ENCODE measurements at regions of chr2 and their contacts with region 1.

Region 1: GRCh38 chr2:23926750-23927571 is at the start of gene ATAD2B:
- DNase-seq: peak; percentile 86 to 98 (median 92)
- ATAC-seq: peak; percentile 82
- H3K4me3 ChIP-seq: peak within 1 kb of the TSS; percentile 84 to 95
- H3K4me3 Mint-ChIP-seq: peak within 1 kb of the TSS; percentile 99
- H3K27ac ChIP-seq: peak within 1 kb of the TSS; percentile 95 to 99
- H3K27ac Mint-ChIP-seq: peak within 1 kb of the TSS; percentile 100
- H3K4me1 ChIP-seq: peaks cover 33% of the 10 kb centered on the region
- H3K4me1 Mint-ChIP-seq: peaks cover 52% of the 10 kb centered on the region
- H3K27me3 ChIP-seq: no peaks in the 10 kb centered on the region
- H3K27me3 Mint-ChIP-seq: no peaks in the 10 kb centered on the region
- CTCF ChIP-seq: peak; percentile 52
- total RNA-seq, gene ATAD2B: 32.0 to 32.4 TPM

Region 2: GRCh38 chr2:23824777-23825212 is 102.2 kb before region 1 on chr2:
- CTCF ChIA-PET with region 1: interaction called, 13 read pairs
- POLR2A ChIA-PET with region 1: interaction called, 4 read pairs
- intact Hi-C with region 1: loop called in 1 of 2 experiments (anchors 1 kb)
- DNase-seq: peak in 3 of 9 experiments; percentile 42 to 68 (median 60)
- ATAC-seq: peak; percentile 69
- H3K4me3 ChIP-seq: no peak overlapping the region
- H3K4me3 Mint-ChIP-seq: no peak overlapping the region
- H3K27ac ChIP-seq: no peak overlapping the region
- H3K27ac Mint-ChIP-seq: no peak overlapping the region
- H3K4me1 ChIP-seq: no peaks in the 10 kb centered on the region
- H3K4me1 Mint-ChIP-seq: no peaks in the 10 kb centered on the region
- H3K27me3 ChIP-seq: no peaks in the 10 kb centered on the region
- H3K27me3 Mint-ChIP-seq: no peaks in the 10 kb centered on the region
- CTCF ChIP-seq: peak; percentile 78

Region 3: DNA sequence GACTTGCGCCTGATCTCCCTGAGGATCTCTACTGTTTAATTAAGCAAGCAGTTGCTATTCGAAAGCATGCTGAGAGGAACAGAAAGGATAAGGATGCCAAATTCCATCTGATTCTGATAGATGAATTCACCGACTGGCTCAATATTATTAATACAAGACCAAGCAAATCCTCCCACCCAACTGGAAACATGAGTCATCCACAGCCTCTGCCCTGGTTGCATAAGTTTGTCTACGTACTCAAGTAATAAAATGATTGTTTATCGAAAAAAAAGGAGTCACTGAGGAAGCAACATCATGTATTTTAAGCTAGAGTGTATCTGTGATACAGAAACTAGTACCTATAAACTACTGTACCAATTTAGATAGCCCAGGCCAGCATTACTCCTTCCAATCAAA is 26.0 kb before region 1 on chr2:
- CTCF ChIA-PET with region 1: interaction called, 14 read pairs
- POLR2A ChIA-PET with region 1: interaction called, 5 read pairs
- intact Hi-C with region 1: no loop called
- DNase-seq: no peak
- ATAC-seq: no peak
- H3K4me3 ChIP-seq: no peak overlapping the region
- H3K4me3 Mint-ChIP-seq: no peak overlapping the region
- H3K27ac ChIP-seq: no peak overlapping the region
- H3K27ac Mint-ChIP-seq: no peak overlapping the region
- H3K4me1 ChIP-seq: peaks cover 13% of the 10 kb centered on the region
- H3K4me1 Mint-ChIP-seq: peaks cover 57% of the 10 kb centered on the region
- H3K27me3 ChIP-seq: no peaks in the 10 kb centered on the region
- H3K27me3 Mint-ChIP-seq: no peaks in the 10 kb centered on the region
- CTCF ChIP-seq: no peak

Region 4: DNA sequence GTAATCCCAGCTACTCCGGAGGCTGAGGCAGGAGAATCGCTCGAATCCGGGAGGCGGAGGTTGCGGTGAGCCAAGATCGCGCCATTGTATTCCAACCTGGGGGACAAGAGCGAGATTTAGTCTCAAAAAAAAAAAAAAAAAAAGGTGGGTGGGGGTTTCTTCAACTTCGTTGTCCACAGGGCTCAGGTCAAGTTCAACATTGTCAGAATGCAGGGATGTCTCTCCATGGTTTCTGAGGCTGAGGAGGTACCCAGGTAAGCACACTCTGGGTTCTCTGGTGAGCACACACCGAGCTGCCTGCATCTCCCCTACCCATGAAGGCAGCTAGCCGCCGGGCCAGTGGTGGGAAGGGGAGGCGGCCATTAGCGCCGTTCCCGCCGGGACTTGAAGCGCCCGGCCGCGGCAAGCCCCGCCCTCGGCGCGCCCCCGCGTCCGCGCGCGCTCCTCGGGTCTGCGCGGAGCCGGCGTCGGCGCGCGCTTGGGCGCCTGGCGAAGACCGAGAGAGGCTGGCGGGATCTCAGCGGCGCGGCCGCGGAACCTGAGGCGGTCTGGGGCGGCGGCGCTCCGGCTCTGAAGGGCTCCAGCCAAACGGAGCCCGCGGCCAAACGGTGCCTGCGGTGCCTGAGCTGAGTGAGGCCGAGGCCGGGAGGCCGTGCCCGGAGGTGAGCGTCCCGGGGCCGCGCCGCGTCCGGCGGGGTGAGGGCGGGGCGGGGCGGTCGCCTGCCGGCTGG is 13.2 kb after region 1 on chr2 and contains the start of gene UBXN2A:
- CTCF ChIA-PET with region 1: interaction called, 21 read pairs
- POLR2A ChIA-PET with region 1: interaction called, 72 read pairs
- intact Hi-C with region 1: loop called (anchors 1 kb)
- DNase-seq: peak; percentile 53 to 92 (median 70)
- ATAC-seq: peak; percentile 82
- H3K4me3 ChIP-seq: peak within 1 kb of the TSS; percentile 90 to 97
- H3K4me3 Mint-ChIP-seq: peak within 1 kb of the TSS; percentile 94
- H3K27ac ChIP-seq: peak within 1 kb of the TSS; percentile 59 to 64
- H3K27ac Mint-ChIP-seq: peak within 1 kb of the TSS; percentile 88
- H3K4me1 ChIP-seq: peaks cover 6% of the 10 kb centered on the region
- H3K4me1 Mint-ChIP-seq: peaks cover 33% of the 10 kb centered on the region
- H3K27me3 ChIP-seq: no peaks in the 10 kb centered on the region
- H3K27me3 Mint-ChIP-seq: no peaks in the 10 kb centered on the region
- CTCF ChIP-seq: no peak
- total RNA-seq, gene UBXN2A: 17.7 to 18.0 TPM

Region 5: GRCh38 chr2:24046930-24047702 is 120.2 kb after region 1 on chr2 and contains the start of gene WDCP:
- CTCF ChIA-PET with region 1: interaction called, 5 read pairs
- POLR2A ChIA-PET with region 1: interaction called, 25 read pairs
- intact Hi-C with region 1: loop called (anchors 1 kb)
- DNase-seq: peak; percentile 81 to 98 (median 92)
- ATAC-seq: peak; percentile 98
- H3K4me3 ChIP-seq: peak within 1 kb of the TSS; percentile 80 to 87
- H3K4me3 Mint-ChIP-seq: peak within 1 kb of the TSS; percentile 93
- H3K27ac ChIP-seq: peak within 1 kb of the TSS; percentile 54 to 56
- H3K27ac Mint-ChIP-seq: peak within 1 kb of the TSS; percentile 90
- H3K4me1 ChIP-seq: peaks cover 21% of the 10 kb centered on the region
- H3K4me1 Mint-ChIP-seq: peaks cover 35% of the 10 kb centered on the region
- H3K27me3 ChIP-seq: no peaks in the 10 kb centered on the region
- H3K27me3 Mint-ChIP-seq: peaks cover 2% of the 10 kb centered on the region
- CTCF ChIP-seq: no peak
- total RNA-seq, gene WDCP: 3.7 to 4.8 TPM

Region 6: GRCh38 chr2:24075915-24076848 is 149.2 kb after region 1 on chr2 and contains the start of gene SF3B6:
- CTCF ChIA-PET with region 1: interaction called, 10 read pairs
- POLR2A ChIA-PET with region 1: interaction called, 44 read pairs
- intact Hi-C with region 1: loop called (anchors 1 kb)
- DNase-seq: peak; percentile 98 to 100 (median 100)
- ATAC-seq: peak; percentile 83
- H3K4me3 ChIP-seq: peak within 1 kb of the TSS; percentile 87 to 100
- H3K4me3 Mint-ChIP-seq: peak within 1 kb of the TSS; percentile 100
- H3K27ac ChIP-seq: peak within 1 kb of the TSS; percentile 91 to 96
- H3K27ac Mint-ChIP-seq: peak within 1 kb of the TSS; percentile 100
- H3K4me1 ChIP-seq: peaks cover 19% of the 10 kb centered on the region
- H3K4me1 Mint-ChIP-seq: peaks cover 36% of the 10 kb centered on the region
- H3K27me3 ChIP-seq: no peaks in the 10 kb centered on the region
- H3K27me3 Mint-ChIP-seq: no peaks in the 10 kb centered on the region
- CTCF ChIP-seq: no peak
- total RNA-seq, gene SF3B6: 69.7 to 78.9 TPM

Region 7: GRCh38 chr2:24084386-24085361 is 157.7 kb after region 1 on chr2 and contains the start of gene TP53I3:
- CTCF ChIA-PET with region 1: interaction called, 31 read pairs
- POLR2A ChIA-PET with region 1: interaction called, 12 read pairs
- intact Hi-C with region 1: loop called (anchors 1 to 2 kb)
- DNase-seq: peak; percentile 64 to 90 (median 80)
- ATAC-seq: peak; percentile 88
- H3K4me3 ChIP-seq: peak within 1 kb of the TSS; percentile 54 to 87
- H3K4me3 Mint-ChIP-seq: peak within 1 kb of the TSS; percentile 88
- H3K27ac ChIP-seq: peak within 1 kb of the TSS in 1 of 2 experiments; percentile 12
- H3K27ac Mint-ChIP-seq: peak within 1 kb of the TSS; percentile 79
- H3K4me1 ChIP-seq: peaks cover 13% of the 10 kb centered on the region
- H3K4me1 Mint-ChIP-seq: peaks cover 14% of the 10 kb centered on the region
- H3K27me3 ChIP-seq: no peaks in the 10 kb centered on the region
- H3K27me3 Mint-ChIP-seq: no peaks in the 10 kb centered on the region
- CTCF ChIP-seq: peak; percentile 82
- total RNA-seq, gene TP53I3: 0.17 TPM in 1 of 2 experiments, not detected in the other

Measured in CD8-positive, alpha-beta T cell (primary cell).